ENCODE measurements at regions of chr9 and their contacts with region 1.

Region 1: DNA sequence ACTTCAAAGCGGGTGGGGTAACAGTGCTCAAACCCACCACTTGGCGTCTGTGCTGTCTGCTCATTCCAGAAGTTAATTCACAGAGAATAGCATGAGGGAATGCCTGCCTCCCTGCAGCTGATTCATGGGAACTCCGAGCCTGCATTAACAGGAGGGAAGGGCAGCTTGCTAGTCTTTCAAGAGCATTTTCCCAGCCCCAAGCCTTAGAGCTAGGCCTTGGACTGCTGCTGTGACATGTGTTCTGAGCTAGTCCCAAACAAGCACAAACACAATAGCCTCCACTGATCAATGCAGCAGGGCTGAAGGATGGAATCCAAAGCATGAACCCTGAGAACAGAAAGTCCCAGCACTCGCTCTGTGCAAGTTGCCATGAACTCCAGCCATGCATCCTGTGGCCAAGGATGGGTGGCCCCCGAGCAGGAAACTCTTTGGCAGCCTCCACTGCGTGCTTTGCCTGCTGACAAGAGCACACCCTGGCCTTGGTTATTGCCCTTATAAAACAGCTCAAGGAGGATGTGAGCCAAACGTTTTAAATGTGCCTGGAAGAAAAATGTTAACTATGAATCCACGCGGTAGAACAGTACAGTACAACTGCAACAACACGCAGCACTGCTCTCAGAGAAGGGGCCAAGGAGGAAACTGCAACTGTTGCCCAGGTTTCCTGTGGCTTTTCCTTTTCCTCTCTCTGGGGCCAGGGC is 653.1 kb upstream of the KLF4 start:
- DNase-seq: peak; percentile 72 to 76
- ATAC-seq: peak; percentile 95 to 99 (median 98)
- H3K4me3 ChIP-seq: no peak overlapping the region
- H3K27ac ChIP-seq: peak overlapping the region; percentile 39 to 88 (median 84)
- H3K4me1 ChIP-seq: peaks cover 8 to 29% (median 21%) of the 10 kb centered on the region in 9 donors
- H3K27me3 ChIP-seq: no peaks in the 10 kb centered on the region
- CTCF ChIP-seq: peak in 2 of 9 donors; percentile 10 to 22

Region 2: GRCh38 chr9:107587191-107587963 is 555.3 kb before region 1 on chr9:
- intact Hi-C with region 1: loop called in 2 of 10 experiments (anchors 10 kb)
- DNase-seq: peak; percentile 60 to 82
- ATAC-seq: peak; percentile 75 to 95 (median 92)
- H3K4me3 ChIP-seq: peak overlapping the region in 7 of 10 donors; percentile 18 to 43 (median 41)
- H3K27ac ChIP-seq: peak overlapping the region; percentile 72 to 89 (median 81)
- H3K4me1 ChIP-seq: peaks cover 0 to 36% (median 12%) of the 10 kb centered on the region in 9 donors
- H3K27me3 ChIP-seq: no peaks in the 10 kb centered on the region
- CTCF ChIP-seq: no peak

Region 3: DNA sequence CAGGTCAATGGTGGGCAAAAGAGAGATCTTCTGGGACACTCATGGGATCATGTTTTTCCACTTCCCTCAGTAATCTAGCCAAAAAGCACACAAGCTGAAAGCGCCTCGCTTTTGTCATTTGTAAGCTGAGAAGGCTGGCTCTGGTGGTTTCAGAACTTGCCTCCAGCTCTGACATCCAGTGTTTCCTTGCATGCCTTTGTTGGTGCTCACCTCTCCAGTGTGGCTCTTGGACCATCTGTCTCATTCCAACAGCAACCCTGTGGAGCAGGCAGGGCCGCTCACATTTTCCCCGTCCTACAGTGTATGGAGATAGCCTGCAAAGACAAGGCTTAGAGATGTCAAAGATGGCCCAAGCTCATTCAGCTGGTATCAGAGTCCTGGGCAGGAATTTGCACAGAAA is 492.3 kb before region 1 on chr9:
- intact Hi-C with region 1: no loop called
- DNase-seq: no peak
- ATAC-seq: no peak
- H3K4me3 ChIP-seq: no peak overlapping the region
- H3K27ac ChIP-seq: no peak overlapping the region
- H3K4me1 ChIP-seq: peaks cover 0 to 21% (median 10%) of the 10 kb centered on the region in 9 donors
- H3K27me3 ChIP-seq: peaks cover 0 to 3% (median 0%) of the 10 kb centered on the region in 7 donors
- CTCF ChIP-seq: no peak

Region 4: GRCh38 chr9:107732781-107733522 is 409.7 kb before region 1 on chr9:
- intact Hi-C with region 1: loop called in 1 of 10 experiments (anchors 10 kb)
- DNase-seq: peak in 1 of 2 donors; percentile 49
- ATAC-seq: peak; percentile 50 to 81 (median 68)
- H3K4me3 ChIP-seq: peak overlapping the region in 8 of 10 donors; percentile 0 to 38 (median 18)
- H3K27ac ChIP-seq: peak overlapping the region; percentile 63 to 95 (median 84)
- H3K4me1 ChIP-seq: peaks cover 3 to 42% (median 28%) of the 10 kb centered on the region in 9 donors
- H3K27me3 ChIP-seq: no peaks in the 10 kb centered on the region
- CTCF ChIP-seq: no peak

Region 5: GRCh38 chr9:108053555-108054061 is 89.0 kb before region 1 on chr9:
- intact Hi-C with region 1: loop called in 1 of 10 experiments (anchors 5 kb)
- DNase-seq: peak; percentile 54 to 61
- ATAC-seq: peak; percentile 51 to 78 (median 66)
- H3K4me3 ChIP-seq: peak overlapping the region in 3 of 10 donors; percentile 8 to 10 (median 8)
- H3K27ac ChIP-seq: peak overlapping the region in 7 of 10 donors; percentile 30 to 54 (median 46)
- H3K4me1 ChIP-seq: peaks cover 5 to 55% (median 15%) of the 10 kb centered on the region in 9 donors
- H3K27me3 ChIP-seq: peaks cover 0 to 6% (median 0%) of the 10 kb centered on the region in 7 donors
- CTCF ChIP-seq: no peak

Region 6: DNA sequence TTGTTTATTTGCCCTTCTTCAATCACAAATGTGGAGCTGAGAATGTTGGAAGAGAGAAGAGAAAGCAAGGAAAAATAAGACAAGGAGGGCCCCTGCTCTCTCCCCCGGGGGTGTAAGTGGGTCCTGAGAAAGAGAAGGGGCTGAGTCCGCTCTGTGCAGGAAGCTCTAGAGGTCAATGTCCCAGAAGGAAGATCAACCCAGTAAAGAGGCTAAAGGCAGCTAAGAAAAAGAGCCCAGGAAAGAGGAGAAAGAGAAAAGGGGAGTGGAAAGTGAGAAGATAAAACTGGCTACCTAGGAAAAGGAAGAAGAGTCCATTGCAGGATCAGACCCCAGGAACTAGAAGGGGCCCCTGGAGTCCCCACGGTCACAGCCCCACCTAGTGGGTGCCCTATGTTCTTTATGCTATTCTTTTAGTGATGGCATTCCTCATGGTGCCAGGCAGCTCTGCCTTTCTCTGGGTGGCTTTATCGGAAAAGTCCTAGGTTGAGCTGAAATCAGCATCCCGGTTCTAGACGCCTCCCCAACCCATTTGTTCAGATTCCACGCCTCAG is 129.8 kb after region 1 on chr9:
- intact Hi-C with region 1: loop called in 2 of 10 experiments (anchors 5 kb)
- DNase-seq: peak; percentile 43 to 46
- ATAC-seq: peak; percentile 69 to 93 (median 86)
- H3K4me3 ChIP-seq: peak overlapping the region in 6 of 10 donors; percentile 1 to 42 (median 24)
- H3K27ac ChIP-seq: peak overlapping the region in 7 of 10 donors; percentile 10 to 71 (median 52)
- H3K4me1 ChIP-seq: peaks cover 0 to 23% (median 8%) of the 10 kb centered on the region in 9 donors
- H3K27me3 ChIP-seq: no peaks in the 10 kb centered on the region
- CTCF ChIP-seq: peak; percentile 49 to 76 (median 65)

Region 7: DNA sequence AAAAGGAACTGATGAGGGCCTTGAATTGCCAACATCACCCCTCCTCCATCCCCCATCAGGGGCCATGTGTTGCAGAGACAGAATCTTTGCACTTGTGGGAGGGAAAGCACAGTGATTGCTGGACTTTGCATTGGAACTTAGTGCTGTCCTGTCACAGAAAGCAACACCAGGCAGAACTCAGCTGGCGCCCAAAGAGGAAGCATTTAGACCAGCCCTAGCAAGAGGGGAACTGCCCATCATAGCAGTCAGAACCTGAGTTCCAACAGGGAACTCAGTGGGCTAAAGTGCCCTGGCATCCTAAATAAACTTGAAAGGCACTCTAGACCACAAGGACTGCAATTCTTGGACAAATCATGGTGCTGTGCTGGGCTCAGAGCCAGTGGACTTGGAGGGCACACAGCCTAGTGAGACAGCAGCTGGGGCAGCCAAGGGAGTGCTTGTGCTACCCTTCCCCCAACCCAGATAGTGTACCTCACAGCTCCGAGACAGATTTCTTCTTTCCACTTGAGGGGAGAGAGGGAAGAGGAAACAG is 585.0 kb after region 1 on chr9:
- intact Hi-C with region 1: no loop called
- DNase-seq: peak; percentile 58 to 68
- ATAC-seq: peak; percentile 65 to 97 (median 86)
- H3K4me3 ChIP-seq: no peak overlapping the region
- H3K27ac ChIP-seq: no peak overlapping the region
- H3K4me1 ChIP-seq: peaks cover 0 to 11% (median 7%) of the 10 kb centered on the region in 9 donors
- H3K27me3 ChIP-seq: no peaks in the 10 kb centered on the region
- CTCF ChIP-seq: no peak